OCI-LY7 (cell line): ENCODE measurements at regions of chr10 and their contacts with region 1.

Region 1: GRCh38 chr10:33008499-33009243 is 50.6 kb upstream of the ITGB1 start:
- DNase-seq: peak; percentile 87
- H3K4me3 ChIP-seq: peak overlapping the region; percentile 24
- H3K27ac ChIP-seq: no peak overlapping the region
- H3K4me1 ChIP-seq: peaks cover 44% of the 10 kb centered on the region
- CTCF ChIP-seq: peak; percentile 100

Region 2: DNA sequence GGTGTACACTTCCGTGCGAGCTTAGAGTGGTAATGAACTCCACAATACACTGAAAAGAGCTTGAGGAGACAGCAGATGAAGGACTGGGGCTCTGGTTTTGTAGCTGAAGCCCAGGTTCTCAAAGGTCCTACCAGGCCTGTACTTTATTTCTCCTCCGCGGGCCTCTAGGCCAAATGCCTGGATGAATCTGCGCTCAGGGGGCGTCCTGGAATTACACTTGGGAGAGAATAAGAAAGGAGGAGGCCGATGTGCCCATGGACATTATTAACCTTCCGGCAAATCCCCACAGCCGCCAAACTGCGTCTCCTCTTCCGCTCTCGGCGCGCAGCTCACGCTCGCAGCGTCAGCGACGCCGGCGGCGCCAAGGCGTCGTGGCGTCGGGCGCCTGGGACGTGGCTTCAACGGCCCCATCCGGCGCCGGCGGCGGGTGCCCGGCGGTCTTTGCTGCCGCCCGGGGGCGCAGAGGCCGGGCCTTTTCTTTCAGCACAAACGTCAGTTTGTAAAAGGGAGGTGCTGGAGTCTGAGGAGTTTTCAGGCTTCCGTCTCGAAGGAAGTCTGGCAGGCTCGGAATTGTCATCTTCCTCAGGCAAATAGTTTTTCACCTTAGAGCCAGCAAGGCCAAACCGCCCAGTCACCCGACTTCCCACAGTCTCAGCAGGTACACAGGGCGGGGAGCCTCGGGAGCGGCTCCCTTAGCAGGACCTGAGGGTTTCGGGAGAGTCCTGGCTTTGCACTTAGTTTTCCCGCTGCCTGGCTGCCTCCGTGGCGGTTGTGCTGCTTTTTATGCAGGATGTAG is 562.7 kb before region 1 on chr10 and contains the start of gene CCDC7:
- CTCF ChIA-PET with region 1: no interaction called
- POLR2A ChIA-PET with region 1: no interaction called
- intact Hi-C with region 1: loop called (anchors 5 kb)
- DNase-seq: peak; percentile 93
- H3K4me3 ChIP-seq: peak within 1 kb of the TSS; percentile 79
- H3K27ac ChIP-seq: peak within 1 kb of the TSS; percentile 66
- H3K4me1 ChIP-seq: peaks cover 8% of the 10 kb centered on the region
- CTCF ChIP-seq: peak; percentile 72
- total RNA-seq, gene CCDC7: 9.8 and 10.9 TPM in 2 replicates

Region 3: DNA sequence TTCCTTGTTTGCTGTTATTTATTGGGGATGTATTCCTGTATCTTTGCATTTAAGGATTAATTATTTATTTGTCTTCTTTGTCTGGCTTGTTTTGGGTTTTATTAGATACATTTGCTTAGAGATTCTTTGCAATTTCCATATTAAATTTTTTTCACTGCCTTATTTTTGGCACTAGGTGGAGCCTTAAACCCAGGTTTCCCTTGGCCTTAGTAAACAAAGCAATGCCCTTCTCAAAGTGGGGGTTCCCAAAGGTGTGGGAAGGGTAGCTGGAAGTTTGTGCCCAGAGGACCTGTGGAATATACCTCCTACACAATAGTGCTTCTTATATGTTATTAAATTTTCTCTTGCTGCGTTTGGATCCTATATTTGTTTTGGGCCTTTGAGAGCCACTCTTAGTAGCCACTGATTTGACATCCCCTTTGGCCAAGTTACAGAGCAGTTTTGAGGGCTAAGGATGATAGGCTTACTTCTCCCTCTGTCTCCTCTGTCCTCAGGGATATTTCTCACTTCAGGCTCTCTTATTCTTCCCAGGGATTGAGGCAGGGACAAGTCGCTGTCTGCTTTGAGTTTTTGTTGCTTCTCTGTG is 213.0 kb before region 1 on chr10:
- CTCF ChIA-PET with region 1: interaction called, 3 read pairs
- POLR2A ChIA-PET with region 1: no interaction called
- intact Hi-C with region 1: loop called (anchors 1 kb)
- DNase-seq: peak; percentile 60
- H3K4me3 ChIP-seq: no peak overlapping the region
- H3K27ac ChIP-seq: no peak overlapping the region
- H3K4me1 ChIP-seq: no peaks in the 10 kb centered on the region
- CTCF ChIP-seq: peak; percentile 98

Region 4: DNA sequence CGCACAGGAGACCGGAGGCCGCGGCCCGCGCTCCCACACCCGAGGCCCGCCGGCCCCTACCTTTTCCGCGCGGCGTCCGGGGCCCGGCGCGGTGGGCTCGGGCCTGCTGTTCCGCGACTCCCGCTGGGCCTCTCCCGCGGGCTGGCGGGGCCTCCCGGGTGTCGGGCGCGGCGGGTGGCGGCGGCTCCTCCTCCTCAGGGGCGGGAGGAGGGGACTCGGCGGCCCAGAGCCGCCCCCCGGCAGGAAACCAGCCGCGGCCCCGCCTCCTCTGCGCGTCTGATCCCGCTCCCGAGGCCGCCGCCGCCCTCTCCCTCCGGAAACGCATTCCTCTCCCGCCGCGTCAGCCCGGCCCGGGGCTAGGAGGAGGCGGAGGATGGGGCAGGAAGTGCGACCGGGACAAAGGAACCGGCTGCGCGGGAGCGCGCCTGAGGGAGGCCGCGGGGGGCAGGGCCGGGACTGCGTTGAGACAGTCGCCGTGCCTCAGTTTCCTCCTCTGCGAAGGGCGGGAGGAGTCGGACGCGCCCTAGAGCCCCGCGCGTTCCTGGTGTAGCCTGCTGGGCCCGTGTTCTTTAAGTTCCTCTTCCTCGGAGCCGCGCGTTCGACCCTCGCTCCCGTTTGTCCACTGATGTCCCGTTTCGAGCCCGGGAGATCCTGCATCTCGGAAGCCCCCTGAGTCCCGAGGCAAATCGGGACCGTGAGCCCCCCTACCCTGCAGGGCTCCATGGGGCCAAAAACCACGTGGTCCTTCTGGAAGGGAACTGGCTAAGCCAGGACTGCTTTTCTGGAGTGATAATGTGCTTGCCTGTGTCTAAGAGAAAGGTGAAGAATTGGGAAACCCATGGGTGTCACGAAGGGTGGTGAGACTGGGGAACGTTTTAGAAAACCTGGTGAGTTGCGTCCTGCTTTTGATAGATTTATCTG is 50.3 kb before region 1 on chr10 and contains the start of gene ITGB1:
- CTCF ChIA-PET with region 1: no interaction called
- POLR2A ChIA-PET with region 1: interaction called, 3 read pairs
- intact Hi-C with region 1: loop called (anchors 2 kb)
- DNase-seq: peak; percentile 85
- H3K4me3 ChIP-seq: peak within 1 kb of the TSS; percentile 94
- H3K27ac ChIP-seq: peak within 1 kb of the TSS; percentile 79
- H3K4me1 ChIP-seq: peaks cover 61% of the 10 kb centered on the region
- CTCF ChIP-seq: no peak
- total RNA-seq, gene ITGB1: 165 and 179 TPM in 2 replicates

Region 5: DNA sequence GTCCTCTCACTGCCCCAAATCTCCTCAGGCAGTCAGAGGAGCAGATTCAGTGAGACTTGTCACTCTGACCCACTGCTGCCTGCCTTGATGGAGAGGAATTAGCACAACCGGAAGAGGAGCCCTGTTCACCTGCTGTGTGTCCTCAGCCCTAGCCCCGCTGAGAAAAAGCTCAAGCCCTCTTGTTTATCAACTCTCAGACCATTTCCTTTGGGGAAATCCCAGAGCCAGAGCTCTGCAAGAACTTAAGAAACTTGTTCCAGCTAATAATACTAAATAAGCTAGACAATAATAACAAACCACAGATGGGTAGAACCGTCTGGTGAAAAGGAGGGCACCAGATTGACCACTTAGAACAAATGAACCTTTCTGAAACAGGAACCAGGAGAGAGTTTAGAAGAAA is 12.9 kb before region 1 on chr10:
- CTCF ChIA-PET with region 1: no interaction called
- POLR2A ChIA-PET with region 1: interaction called, 15 read pairs
- intact Hi-C with region 1: no loop called
- DNase-seq: peak; percentile 85
- H3K4me3 ChIP-seq: peak overlapping the region; percentile 33
- H3K27ac ChIP-seq: peak overlapping the region; percentile 80
- H3K4me1 ChIP-seq: peaks cover 39% of the 10 kb centered on the region
- CTCF ChIP-seq: no peak

Region 6: DNA sequence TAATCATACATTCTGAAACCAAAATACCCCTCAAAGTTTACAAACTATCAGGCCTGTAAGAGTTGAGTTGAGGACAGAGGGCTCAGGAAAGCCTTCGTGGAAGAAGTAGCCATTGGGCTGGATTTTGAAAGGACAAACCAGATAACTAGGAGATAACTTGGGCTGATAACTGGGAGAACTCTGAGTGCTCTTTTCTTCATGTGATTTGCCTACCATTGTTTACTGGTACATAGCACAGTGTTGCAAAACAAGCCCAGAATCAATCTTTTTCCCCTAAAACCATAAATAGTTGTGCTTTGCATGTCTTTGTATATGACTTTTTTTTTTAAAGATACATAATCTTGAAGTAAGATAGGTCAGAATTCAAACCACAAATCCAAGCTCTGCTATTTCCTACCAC is 56.0 kb after region 1 on chr10:
- CTCF ChIA-PET with region 1: no interaction called
- POLR2A ChIA-PET with region 1: no interaction called
- intact Hi-C with region 1: no loop called
- DNase-seq: no peak
- H3K4me3 ChIP-seq: no peak overlapping the region
- H3K27ac ChIP-seq: no peak overlapping the region
- H3K4me1 ChIP-seq: no peaks in the 10 kb centered on the region
- CTCF ChIP-seq: no peak

Region 7: DNA sequence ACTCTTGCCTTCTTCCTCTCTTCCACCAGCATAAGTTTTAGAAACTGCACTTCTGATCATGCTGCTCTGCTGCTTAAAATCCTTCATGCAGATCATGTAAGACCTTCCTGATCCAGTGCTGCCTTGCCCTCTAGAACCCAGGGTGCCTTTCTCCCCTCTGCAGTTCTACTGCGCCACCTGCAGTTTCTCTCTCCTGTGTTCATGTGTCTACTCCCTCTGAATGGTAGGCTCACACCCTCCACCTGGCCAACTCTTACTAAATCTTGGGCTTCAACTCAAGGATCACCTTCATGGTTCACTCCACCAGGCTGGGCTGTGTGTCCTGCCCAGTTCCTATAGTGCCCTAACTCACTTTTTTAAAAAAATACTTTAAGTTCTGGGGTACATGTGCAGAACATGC is 124.0 kb after region 1 on chr10:
- CTCF ChIA-PET with region 1: no interaction called
- POLR2A ChIA-PET with region 1: interaction called, 4 read pairs
- intact Hi-C with region 1: loop called (anchors 1 kb)
- DNase-seq: peak; percentile 78
- H3K4me3 ChIP-seq: no peak overlapping the region
- H3K27ac ChIP-seq: no peak overlapping the region
- H3K4me1 ChIP-seq: peaks cover 14% of the 10 kb centered on the region
- CTCF ChIP-seq: peak; percentile 82

Region 8: GRCh38 chr10:33155720-33156638 is 147.3 kb after region 1 on chr10:
- CTCF ChIA-PET with region 1: no interaction called
- POLR2A ChIA-PET with region 1: interaction called, 7 read pairs
- intact Hi-C with region 1: loop called (anchors 1 kb)
- DNase-seq: peak; percentile 79
- H3K4me3 ChIP-seq: no peak overlapping the region
- H3K27ac ChIP-seq: no peak overlapping the region
- H3K4me1 ChIP-seq: peaks cover 48% of the 10 kb centered on the region
- CTCF ChIP-seq: peak; percentile 96